A673 (cell line): ENCODE measurements at regions of chr15 and their contacts with region 1.

Region 1: GRCh38 chr15:74607662-74608061 is 8.0 kb upstream of the CLK3 start:
- DNase-seq: no peak
- H3K4me3 ChIP-seq: no peak overlapping the region
- H3K27ac ChIP-seq: no peak overlapping the region
- H3K4me1 ChIP-seq: no peaks in the 10 kb centered on the region
- H3K27me3 ChIP-seq: no peaks in the 10 kb centered on the region
- CTCF ChIP-seq: no peak

Region 2: GRCh38 chr15:72671535-72671934 is 1936.1 kb before region 1 on chr15:
- CTCF ChIA-PET with region 1: no interaction called
- POLR2A ChIA-PET with region 1: interaction called, 14 read pairs
- intact Hi-C with region 1: no loop called
- DNase-seq: no peak
- H3K4me3 ChIP-seq: no peak overlapping the region
- H3K27ac ChIP-seq: no peak overlapping the region
- H3K4me1 ChIP-seq: no peaks in the 10 kb centered on the region
- H3K27me3 ChIP-seq: no peaks in the 10 kb centered on the region
- CTCF ChIP-seq: no peak

Region 3: GRCh38 chr15:74322181-74323076 is 285.2 kb before region 1 on chr15:
- CTCF ChIA-PET with region 1: no interaction called
- POLR2A ChIA-PET with region 1: no interaction called
- intact Hi-C with region 1: no loop called
- DNase-seq: peak; percentile 76
- H3K4me3 ChIP-seq: no peak overlapping the region
- H3K27ac ChIP-seq: no peak overlapping the region
- H3K4me1 ChIP-seq: peaks cover 29% of the 10 kb centered on the region
- H3K27me3 ChIP-seq: no peaks in the 10 kb centered on the region
- CTCF ChIP-seq: peak; percentile 92